PC-3 (cell line): ENCODE measurements at regions of chr6 and their contacts with region 1.

Region 1: DNA sequence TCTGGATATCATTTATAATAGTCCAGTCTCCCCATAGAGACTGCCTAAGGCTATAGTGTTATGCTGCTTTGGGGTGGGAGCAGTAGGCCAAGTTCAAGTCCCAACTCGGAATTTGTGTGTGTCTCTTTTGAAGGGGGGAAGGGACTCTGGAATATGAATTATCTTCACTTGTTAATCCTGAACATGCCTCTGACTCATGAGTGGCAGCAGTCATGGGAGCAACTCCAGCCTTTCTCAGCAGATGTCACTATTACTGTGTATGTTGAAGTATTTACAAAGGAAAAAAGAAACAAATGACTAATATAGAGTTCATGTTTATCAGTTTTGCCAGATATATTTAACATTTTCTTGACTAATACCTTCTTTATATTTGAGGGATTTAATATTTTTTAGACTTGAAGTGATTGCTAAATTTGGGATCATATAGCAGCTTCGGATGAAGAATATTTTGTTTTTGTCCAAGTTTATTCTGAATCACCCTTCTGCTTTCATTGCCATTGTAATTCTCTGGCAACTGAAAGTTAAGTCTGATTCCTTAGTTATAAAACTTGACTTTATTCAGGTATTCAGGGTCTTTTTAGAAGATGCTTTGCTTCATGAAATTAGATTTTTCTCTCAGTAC is 23.4 kb downstream of the FAM217A start:
- DNase-seq: peak; percentile 89
- ATAC-seq: peak; percentile 57
- H3K4me3 ChIP-seq: no peak overlapping the region
- H3K27ac ChIP-seq: peak overlapping the region; percentile 28
- H3K4me1 ChIP-seq: peaks cover 68% of the 10 kb centered on the region
- H3K27me3 ChIP-seq: no peaks in the 10 kb centered on the region
- CTCF ChIP-seq: peak; percentile 83

Region 2: GRCh38 chr6:3712827-3713665 is 342.5 kb before region 1 on chr6:
- CTCF ChIA-PET with region 1: no interaction called
- POLR2A ChIA-PET with region 1: no interaction called
- intact Hi-C with region 1: no loop called
- DNase-seq: no peak
- ATAC-seq: no peak
- H3K4me3 ChIP-seq: no peak overlapping the region
- H3K27ac ChIP-seq: no peak overlapping the region
- H3K4me1 ChIP-seq: no peaks in the 10 kb centered on the region
- H3K27me3 ChIP-seq: no peaks in the 10 kb centered on the region
- CTCF ChIP-seq: no peak

Region 3: GRCh38 chr6:3962957-3963303 is 92.6 kb before region 1 on chr6:
- CTCF ChIA-PET with region 1: no interaction called
- POLR2A ChIA-PET with region 1: no interaction called
- intact Hi-C with region 1: no loop called
- DNase-seq: peak; percentile 43
- ATAC-seq: no peak
- H3K4me3 ChIP-seq: no peak overlapping the region
- H3K27ac ChIP-seq: no peak overlapping the region
- H3K4me1 ChIP-seq: peaks cover 8% of the 10 kb centered on the region; the same call in 1 of the 2 replicates
- H3K27me3 ChIP-seq: no peaks in the 10 kb centered on the region
- CTCF ChIP-seq: no peak

Region 4: DNA sequence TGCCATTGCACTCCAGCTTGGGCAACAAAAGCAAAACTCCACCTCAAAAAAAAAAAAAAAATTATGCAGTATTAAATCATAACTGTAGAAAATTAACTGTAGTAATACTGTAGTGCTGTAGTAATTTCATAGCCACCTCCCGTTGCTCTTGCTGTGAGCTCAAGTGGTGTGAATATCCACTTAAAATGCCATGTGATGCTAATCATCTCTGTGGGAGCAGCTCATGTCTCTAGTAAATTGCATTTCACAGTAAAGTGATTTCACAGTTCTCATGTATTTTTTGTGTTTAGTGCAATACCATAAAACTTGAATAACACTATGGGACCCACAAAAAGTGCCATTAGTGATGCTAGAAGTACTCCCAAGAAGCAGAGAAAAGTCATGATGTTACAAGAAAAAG is 37.8 kb after region 1 on chr6:
- CTCF ChIA-PET with region 1: no interaction called
- POLR2A ChIA-PET with region 1: no interaction called
- intact Hi-C with region 1: no loop called
- DNase-seq: no peak
- ATAC-seq: no peak
- H3K4me3 ChIP-seq: no peak overlapping the region
- H3K27ac ChIP-seq: no peak overlapping the region
- H3K4me1 ChIP-seq: no peaks in the 10 kb centered on the region
- H3K27me3 ChIP-seq: no peaks in the 10 kb centered on the region
- CTCF ChIP-seq: no peak

Region 5: GRCh38 chr6:4125936-4126864 is 70.7 kb after region 1 on chr6:
- CTCF ChIA-PET with region 1: no interaction called
- POLR2A ChIA-PET with region 1: no interaction called
- intact Hi-C with region 1: loop called (anchors 1 kb)
- DNase-seq: peak; percentile 91
- ATAC-seq: peak; percentile 75
- H3K4me3 ChIP-seq: peak overlapping the region; percentile 17; the same call in 1 of the 2 replicates
- H3K27ac ChIP-seq: peak overlapping the region; percentile 73
- H3K4me1 ChIP-seq: peaks cover 62% of the 10 kb centered on the region
- H3K27me3 ChIP-seq: no peaks in the 10 kb centered on the region
- CTCF ChIP-seq: peak; percentile 57

Region 6: GRCh38 chr6:4155848-4156466 is 100.4 kb after region 1 on chr6:
- CTCF ChIA-PET with region 1: interaction called, 6 read pairs
- POLR2A ChIA-PET with region 1: no interaction called
- intact Hi-C with region 1: loop called (anchors 1 kb)
- DNase-seq: peak; percentile 93
- ATAC-seq: peak; percentile 97
- H3K4me3 ChIP-seq: no peak overlapping the region
- H3K27ac ChIP-seq: no peak overlapping the region
- H3K4me1 ChIP-seq: peaks cover 5% of the 10 kb centered on the region
- H3K27me3 ChIP-seq: no peaks in the 10 kb centered on the region
- CTCF ChIP-seq: peak; percentile 89